Colonic mucosa (tissue), 4 donors: ENCODE measurements at regions of chr13 and their contacts with region 1.

Region 1: DNA sequence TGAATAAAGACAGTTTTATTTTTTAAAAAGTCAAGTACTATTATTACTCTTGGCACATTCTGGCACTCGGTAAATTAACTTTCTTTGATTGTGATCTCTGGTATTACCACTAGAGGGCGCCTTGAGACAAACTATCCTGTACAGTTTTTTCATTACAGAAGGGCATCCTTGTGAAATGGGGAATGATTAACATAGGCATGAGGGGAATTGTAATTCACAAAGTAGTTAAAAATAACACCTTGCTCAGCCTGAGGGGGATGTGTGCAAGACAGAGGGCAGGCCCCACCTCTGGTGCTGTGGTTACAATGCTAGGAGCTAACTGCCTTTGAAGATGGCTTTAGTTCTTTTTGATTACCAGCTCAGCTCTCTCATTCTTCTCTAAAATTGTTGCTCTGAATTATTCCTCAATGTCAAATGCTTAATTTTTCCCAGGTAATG is 24.2 kb upstream of the C1QTNF9B start:
- DNase-seq: peak; percentile 25
- H3K4me3 ChIP-seq: no peak overlapping the region
- H3K27ac ChIP-seq: no peak overlapping the region
- H3K4me1 ChIP-seq: no peaks in the 10 kb centered on the region
- H3K27me3 ChIP-seq: no peaks in the 10 kb centered on the region
- CTCF ChIP-seq: peak; percentile 68

Region 2: GRCh38 chr13:23960566-23961156 is 39.2 kb after region 1 on chr13:
- intact Hi-C with region 1: loop called (anchors 2 kb)
- DNase-seq: no peak
- H3K4me3 ChIP-seq: no peak overlapping the region
- H3K27ac ChIP-seq: no peak overlapping the region
- H3K4me1 ChIP-seq: peaks cover 5% of the 10 kb centered on the region
- H3K27me3 ChIP-seq: no peaks in the 10 kb centered on the region
- CTCF ChIP-seq: peak; percentile 65